MCF 10A (cell line): ENCODE measurements at regions of chr5 and their contacts with region 1.

Region 1: GRCh38 chr5:158074992-158075769 is 216.2 kb upstream of the CLINT1 start:
- DNase-seq: peak; percentile 73
- H3K4me3 Mint-ChIP-seq: no peak overlapping the region
- H3K27ac Mint-ChIP-seq: peak overlapping the region; percentile 61
- H3K4me1 Mint-ChIP-seq: peaks cover 7% of the 10 kb centered on the region
- H3K27me3 Mint-ChIP-seq: no peaks in the 10 kb centered on the region
- CTCF ChIP-seq: peak; percentile 91

Region 2: GRCh38 chr5:158013939-158014338 is 61.2 kb before region 1 on chr5:
- CTCF ChIA-PET with region 1: interaction called, 10 read pairs
- POLR2A ChIA-PET with region 1: interaction called, 4 read pairs
- intact Hi-C with region 1: loop called (anchors 1 kb)
- DNase-seq: peak; percentile 64
- H3K4me3 Mint-ChIP-seq: no peak overlapping the region
- H3K27ac Mint-ChIP-seq: no peak overlapping the region
- H3K4me1 Mint-ChIP-seq: no peaks in the 10 kb centered on the region
- H3K27me3 Mint-ChIP-seq: no peaks in the 10 kb centered on the region
- CTCF ChIP-seq: peak; percentile 68

Region 3: GRCh38 chr5:158039911-158040347 is 35.3 kb before region 1 on chr5:
- CTCF ChIA-PET with region 1: interaction called, 11 read pairs
- POLR2A ChIA-PET with region 1: no interaction called
- intact Hi-C with region 1: no loop called
- DNase-seq: no peak
- H3K4me3 Mint-ChIP-seq: no peak overlapping the region
- H3K27ac Mint-ChIP-seq: no peak overlapping the region
- H3K4me1 Mint-ChIP-seq: peaks cover 10% of the 10 kb centered on the region
- H3K27me3 Mint-ChIP-seq: no peaks in the 10 kb centered on the region
- CTCF ChIP-seq: no peak

Region 4: DNA sequence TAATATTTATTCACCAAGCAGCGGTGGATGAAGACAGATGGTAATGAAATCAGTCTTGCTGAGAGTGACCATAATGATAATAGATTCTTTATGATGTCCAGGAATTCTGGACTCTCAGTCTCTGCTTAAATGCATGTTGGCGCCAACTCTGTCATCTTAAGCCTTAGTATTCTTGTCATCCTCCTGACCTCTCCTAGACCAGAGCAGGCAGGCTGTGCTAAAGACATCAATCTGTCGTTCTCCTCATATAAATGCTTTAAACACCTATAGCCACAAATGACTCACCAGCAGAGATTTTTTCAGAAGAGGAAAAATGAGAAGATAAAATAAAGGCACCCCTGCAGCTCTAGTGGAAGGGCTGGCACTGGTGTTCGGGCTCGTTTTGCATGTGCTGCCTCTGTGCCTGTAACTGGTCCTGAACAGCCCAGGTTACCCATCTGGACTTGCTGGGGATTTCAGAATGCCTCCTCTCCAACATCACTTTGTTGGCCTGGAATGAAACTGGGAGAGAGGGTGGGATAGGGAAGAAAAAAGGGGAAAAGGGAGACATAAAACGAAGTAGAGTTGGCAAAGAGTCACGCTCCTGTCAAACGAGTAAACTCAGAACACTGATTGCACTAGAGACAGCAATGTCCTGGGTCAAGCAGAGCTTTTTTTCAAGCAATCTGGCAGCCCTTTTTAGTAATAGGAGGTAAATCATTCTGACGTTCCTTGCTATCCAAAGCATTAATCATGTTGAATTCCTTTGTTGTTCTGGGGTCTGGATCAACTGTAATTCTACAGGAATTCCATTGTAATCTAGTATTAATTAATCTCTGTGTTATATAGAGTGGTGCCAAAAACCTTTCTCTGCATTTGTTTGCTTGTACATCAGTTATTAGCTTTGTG is 20.7 kb before region 1 on chr5:
- CTCF ChIA-PET with region 1: interaction called, 190 read pairs
- POLR2A ChIA-PET with region 1: interaction called, 13 read pairs
- intact Hi-C with region 1: no loop called
- DNase-seq: peak; percentile 21
- H3K4me3 Mint-ChIP-seq: peak overlapping the region; percentile 19
- H3K27ac Mint-ChIP-seq: peak overlapping the region; percentile 55
- H3K4me1 Mint-ChIP-seq: peaks cover 55% of the 10 kb centered on the region
- H3K27me3 Mint-ChIP-seq: no peaks in the 10 kb centered on the region
- CTCF ChIP-seq: no peak

Region 5: GRCh38 chr5:158154226-158155005 is 79.2 kb after region 1 on chr5:
- CTCF ChIA-PET with region 1: interaction called, 12 read pairs
- POLR2A ChIA-PET with region 1: no interaction called
- intact Hi-C with region 1: loop called (anchors 2 kb)
- DNase-seq: peak; percentile 98
- H3K4me3 Mint-ChIP-seq: no peak overlapping the region
- H3K27ac Mint-ChIP-seq: no peak overlapping the region
- H3K4me1 Mint-ChIP-seq: peaks cover 12% of the 10 kb centered on the region
- H3K27me3 Mint-ChIP-seq: no peaks in the 10 kb centered on the region
- CTCF ChIP-seq: no peak

Region 6: DNA sequence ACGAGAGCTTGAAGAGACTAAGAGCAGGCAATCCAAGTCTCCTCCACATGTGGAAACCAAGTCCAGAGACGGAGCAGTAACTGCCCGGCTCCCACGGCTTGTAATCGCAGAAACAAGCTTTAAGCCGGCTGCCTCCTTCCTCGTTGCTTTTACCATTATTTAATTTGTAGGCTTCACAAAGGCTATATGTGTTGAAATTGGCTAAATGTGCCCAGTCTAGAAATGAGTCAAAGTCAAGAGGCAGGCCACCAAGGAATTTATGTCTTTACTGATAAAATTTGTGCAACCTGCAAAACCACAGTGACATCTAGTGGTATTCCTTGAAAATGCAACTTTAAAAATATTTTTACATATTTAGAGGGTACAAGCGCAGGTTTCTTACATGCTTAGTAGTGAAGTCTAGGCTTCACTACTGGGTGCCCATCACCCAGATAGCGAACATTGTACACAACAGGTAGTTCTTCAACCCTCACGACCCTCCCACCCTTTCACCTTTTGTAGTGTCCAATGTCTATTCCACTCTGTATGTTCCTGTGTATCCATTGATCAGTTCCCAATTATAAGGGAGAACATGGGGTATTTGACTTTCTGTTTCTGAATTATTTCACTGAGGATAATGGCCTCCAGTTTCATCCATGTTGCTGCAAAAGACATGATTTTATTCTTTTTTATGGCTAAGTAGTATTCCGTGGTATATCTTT is 1058.0 kb after region 1 on chr5:
- CTCF ChIA-PET with region 1: interaction called, 12 read pairs
- POLR2A ChIA-PET with region 1: interaction called, 3 read pairs
- intact Hi-C with region 1: loop called (anchors 1 kb)
- DNase-seq: peak; percentile 80
- H3K4me3 Mint-ChIP-seq: no peak overlapping the region
- H3K27ac Mint-ChIP-seq: no peak overlapping the region
- H3K4me1 Mint-ChIP-seq: peaks cover 7% of the 10 kb centered on the region
- H3K27me3 Mint-ChIP-seq: no peaks in the 10 kb centered on the region
- CTCF ChIP-seq: peak; percentile 92